ENCODE measurements at regions of chr18 and their contacts with region 1.

Region 1: GRCh38 chr18:31555971-31556747 is 35.5 kb upstream of the TTR start:
- DNase-seq: peak; percentile 59 to 72
- H3K4me3 ChIP-seq: no peak overlapping the region
- H3K4me1 ChIP-seq: no peaks in the 10 kb centered on the region
- H3K27me3 ChIP-seq: peaks cover 2% of the 10 kb centered on the region; the same call in 1 of the 2 replicates

Region 2: GRCh38 chr18:30987450-30988241 is 568.5 kb before region 1 on chr18:
- in situ Hi-C with region 1: loop called (anchors 25 kb)
- DNase-seq: no peak
- H3K4me3 ChIP-seq: no peak overlapping the region
- H3K4me1 ChIP-seq: no peaks in the 10 kb centered on the region
- H3K27me3 ChIP-seq: no peaks in the 10 kb centered on the region

Region 3: DNA sequence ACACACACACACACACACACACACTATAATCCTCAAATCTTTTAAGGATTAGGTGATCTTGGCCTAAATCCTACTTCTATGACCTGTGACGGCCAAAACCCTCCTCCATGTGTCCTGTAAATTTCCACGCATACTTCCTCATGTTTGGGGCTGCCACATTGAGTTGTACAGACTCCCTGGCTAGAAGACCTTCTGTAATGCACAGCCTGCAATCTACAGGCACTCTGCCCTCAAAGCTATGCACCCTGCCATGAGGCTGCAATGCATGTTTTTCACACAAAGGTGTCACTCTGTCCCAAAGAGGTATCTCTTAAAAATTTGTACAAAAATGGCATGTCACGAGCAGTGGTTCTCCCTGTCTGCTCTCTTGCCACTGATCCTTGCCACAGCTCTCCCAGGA is 154.7 kb after region 1 on chr18:
- in situ Hi-C with region 1: loop called (anchors 10 kb)
- DNase-seq: peak in 1 of 2 experiments; percentile 40
- H3K4me3 ChIP-seq: no peak overlapping the region
- H3K4me1 ChIP-seq: no peaks in the 10 kb centered on the region
- H3K27me3 ChIP-seq: no peaks in the 10 kb centered on the region

Region 4: GRCh38 chr18:31977270-31977872 is 421.2 kb after region 1 on chr18:
- in situ Hi-C with region 1: loop called (anchors 10 kb)
- DNase-seq: peak; percentile 72 to 74
- H3K4me3 ChIP-seq: no peak overlapping the region
- H3K4me1 ChIP-seq: peaks cover 3% of the 10 kb centered on the region; the same call in 1 of the 2 replicates
- H3K27me3 ChIP-seq: no peaks in the 10 kb centered on the region

Measured in HAP-1 (cell line).